CD4-positive, alpha-beta T cell (primary cell): ENCODE measurements at regions of chr3 and their contacts with region 1.

Region 1: DNA sequence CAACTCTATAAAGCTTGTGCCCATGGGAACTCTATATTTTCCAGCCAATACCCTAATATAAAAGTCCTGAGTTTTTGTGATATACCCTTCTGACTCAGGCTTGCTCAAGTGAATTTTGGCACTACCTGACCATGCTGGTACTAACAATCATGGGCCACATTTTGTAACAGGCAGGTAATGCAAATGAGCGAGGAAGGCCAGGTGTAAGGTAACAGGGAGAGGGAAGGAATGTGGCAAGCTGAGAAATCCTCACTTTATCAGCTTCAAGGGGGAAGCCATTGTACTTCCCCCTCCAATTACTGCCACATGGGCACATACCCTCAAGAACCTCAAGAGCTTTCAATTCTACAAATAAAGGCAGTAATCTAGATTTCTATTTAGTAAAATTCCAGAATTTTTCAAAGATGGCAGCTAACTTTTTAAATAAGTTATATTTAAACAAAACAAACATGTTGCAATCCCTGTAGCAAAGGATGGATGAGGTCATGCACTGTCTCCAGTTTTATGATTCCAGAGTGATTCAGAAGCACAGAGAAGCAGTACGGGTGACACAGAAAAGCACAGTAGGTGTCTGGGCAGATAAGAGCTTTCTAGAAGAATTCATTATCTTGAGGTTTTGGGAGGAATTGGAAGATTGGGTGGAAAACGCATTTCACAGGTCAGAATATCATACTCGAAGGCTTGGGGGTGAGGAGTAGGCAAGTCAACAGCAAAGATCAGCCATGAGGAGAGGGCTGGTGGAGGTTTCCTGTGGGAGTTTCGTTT is 87.6 kb downstream of the FOXP1 start:
- DNase-seq: peak in 4 of 14 experiments; percentile 41 to 70 (median 57)
- ATAC-seq: no peak
- H3K4me3 ChIP-seq: peak overlapping the region; percentile 33
- H3K4me3 Mint-ChIP-seq: peak overlapping the region; percentile 71
- H3K27ac ChIP-seq: peak overlapping the region; percentile 51 to 64
- H3K27ac Mint-ChIP-seq: peak overlapping the region; percentile 95
- H3K4me1 ChIP-seq: peaks cover 61% of the 10 kb centered on the region
- H3K4me1 Mint-ChIP-seq: peaks cover 90% of the 10 kb centered on the region
- H3K27me3 ChIP-seq: no peaks in the 10 kb centered on the region
- H3K27me3 Mint-ChIP-seq: no peaks in the 10 kb centered on the region
- CTCF ChIP-seq: no peak

Region 2: GRCh38 chr3:70774641-70775040 is 721.2 kb before region 1 on chr3:
- CTCF ChIA-PET with region 1: no interaction called
- POLR2A ChIA-PET with region 1: no interaction called
- intact Hi-C with region 1: no loop called
- DNase-seq: no peak
- ATAC-seq: no peak
- H3K4me3 ChIP-seq: no peak overlapping the region
- H3K4me3 Mint-ChIP-seq: no peak overlapping the region
- H3K27ac ChIP-seq: no peak overlapping the region
- H3K27ac Mint-ChIP-seq: no peak overlapping the region
- H3K4me1 ChIP-seq: no peaks in the 10 kb centered on the region
- H3K4me1 Mint-ChIP-seq: no peaks in the 10 kb centered on the region
- H3K27me3 ChIP-seq: peaks cover 0 to 13% of the 10 kb centered on the region in 2 experiments
- H3K27me3 Mint-ChIP-seq: peaks cover 23% of the 10 kb centered on the region
- CTCF ChIP-seq: no peak

Region 3: DNA sequence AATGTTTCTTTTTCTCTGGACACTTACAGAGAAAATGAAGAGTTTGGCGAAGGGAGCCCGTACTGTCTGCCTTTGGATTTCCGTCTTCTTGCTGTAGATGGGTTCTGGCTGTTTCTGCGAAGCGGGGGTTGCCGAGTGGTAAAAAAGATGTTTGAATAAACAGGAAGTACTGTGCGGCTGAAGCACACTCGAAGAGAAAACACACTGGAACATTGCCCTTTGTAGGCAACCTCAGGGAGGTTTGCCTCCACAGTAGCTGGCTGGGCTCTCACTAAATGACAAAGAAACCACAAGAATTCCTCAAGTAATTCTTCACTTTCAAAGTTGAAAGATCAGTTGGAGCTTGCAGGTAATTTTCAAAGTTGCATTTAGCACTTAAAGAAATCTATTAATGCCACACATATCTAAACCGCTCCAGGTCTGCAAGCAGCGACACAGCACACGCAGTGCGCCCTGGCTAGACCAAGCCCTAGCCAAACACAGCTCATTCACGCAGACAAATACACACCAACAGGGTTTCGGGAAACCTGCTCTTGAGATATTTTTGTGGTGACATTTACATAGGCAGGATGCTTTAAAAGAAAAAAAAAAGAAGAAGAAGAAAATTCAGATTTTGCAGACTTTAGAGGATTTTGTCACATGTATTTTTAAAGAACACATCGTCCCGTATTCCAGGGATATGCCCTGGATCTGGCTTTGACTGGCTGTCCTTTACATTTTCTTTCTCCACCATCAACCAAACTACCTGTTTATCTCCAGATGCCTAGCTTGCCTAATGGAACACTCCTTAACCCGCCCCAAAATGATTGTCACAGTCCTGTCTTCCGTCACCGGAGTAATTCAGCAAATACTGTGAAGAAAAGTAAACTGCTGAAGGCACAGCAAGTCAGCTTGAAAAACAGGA is 365.2 kb before region 1 on chr3:
- CTCF ChIA-PET with region 1: no interaction called
- POLR2A ChIA-PET with region 1: interaction called, 6 read pairs
- intact Hi-C with region 1: loop called in 1 of 2 experiments (anchors 5 kb)
- DNase-seq: peak; percentile 56 to 89 (median 73)
- ATAC-seq: peak; percentile 76
- H3K4me3 ChIP-seq: peak overlapping the region; percentile 70
- H3K4me3 Mint-ChIP-seq: peak overlapping the region; percentile 91
- H3K27ac ChIP-seq: peak overlapping the region; percentile 79 to 93
- H3K27ac Mint-ChIP-seq: peak overlapping the region; percentile 98
- H3K4me1 ChIP-seq: peaks cover 53% of the 10 kb centered on the region
- H3K4me1 Mint-ChIP-seq: peaks cover 88% of the 10 kb centered on the region
- H3K27me3 ChIP-seq: no peaks in the 10 kb centered on the region
- H3K27me3 Mint-ChIP-seq: no peaks in the 10 kb centered on the region
- CTCF ChIP-seq: no peak

Region 4: GRCh38 chr3:71369701-71370391 is 126.0 kb before region 1 on chr3:
- CTCF ChIA-PET with region 1: no interaction called
- POLR2A ChIA-PET with region 1: interaction called, 4 read pairs
- intact Hi-C with region 1: loop called (anchors 2 to 5 kb)
- DNase-seq: no peak
- ATAC-seq: no peak
- H3K4me3 ChIP-seq: no peak overlapping the region
- H3K4me3 Mint-ChIP-seq: no peak overlapping the region
- H3K27ac ChIP-seq: no peak overlapping the region
- H3K27ac Mint-ChIP-seq: peak overlapping the region; percentile 87
- H3K4me1 ChIP-seq: peaks cover 41% of the 10 kb centered on the region
- H3K4me1 Mint-ChIP-seq: peaks cover 82% of the 10 kb centered on the region
- H3K27me3 ChIP-seq: no peaks in the 10 kb centered on the region
- H3K27me3 Mint-ChIP-seq: no peaks in the 10 kb centered on the region
- CTCF ChIP-seq: no peak

Region 5: DNA sequence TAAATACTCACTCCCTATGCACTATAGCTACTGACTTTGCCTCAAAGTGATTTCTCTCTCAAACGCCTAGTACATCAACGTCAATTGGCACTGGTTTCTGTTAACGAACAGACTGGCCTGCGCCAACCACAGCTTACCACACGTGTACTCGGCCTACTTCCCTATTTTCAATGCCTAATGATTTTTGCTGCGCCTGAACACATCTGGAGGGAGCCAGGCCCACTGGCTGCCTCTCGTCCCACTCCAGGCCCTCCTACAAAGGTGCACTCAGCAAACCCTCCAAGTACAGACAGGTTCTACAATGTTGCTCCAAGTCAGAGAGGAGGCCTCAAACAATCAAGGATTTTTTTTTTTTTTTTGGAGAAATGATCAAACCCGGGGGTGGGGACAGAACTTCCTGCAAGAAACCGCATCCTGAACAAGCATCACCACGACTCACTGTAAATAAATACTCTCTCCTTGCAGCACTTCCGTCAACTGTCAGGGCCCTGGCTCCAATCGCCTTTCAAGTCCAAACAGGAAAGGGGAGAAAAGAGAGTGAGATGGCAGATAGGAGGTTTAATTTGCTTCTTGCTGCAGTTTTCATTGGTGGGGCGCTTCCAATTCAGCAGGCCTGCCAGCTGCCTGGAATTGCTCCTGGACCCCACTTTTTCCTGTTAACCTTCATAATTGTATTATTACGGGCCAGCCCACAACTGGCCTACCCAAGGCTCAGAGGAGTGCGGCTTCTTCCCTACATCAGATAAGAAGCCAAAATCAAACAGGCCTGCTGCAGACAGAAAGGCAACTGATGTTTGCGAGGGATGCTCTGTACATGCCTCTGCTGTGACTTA is 51.6 kb before region 1 on chr3:
- CTCF ChIA-PET with region 1: no interaction called
- POLR2A ChIA-PET with region 1: interaction called, 11 read pairs
- intact Hi-C with region 1: loop called in 1 of 2 experiments (anchors 2 kb)
- DNase-seq: peak; percentile 53 to 95 (median 68)
- ATAC-seq: peak; percentile 78
- H3K4me3 ChIP-seq: no peak overlapping the region
- H3K4me3 Mint-ChIP-seq: peak overlapping the region; percentile 79
- H3K27ac ChIP-seq: peak overlapping the region; percentile 67 to 82
- H3K27ac Mint-ChIP-seq: peak overlapping the region; percentile 94
- H3K4me1 ChIP-seq: peaks cover 97% of the 10 kb centered on the region
- H3K4me1 Mint-ChIP-seq: peaks cover 97% of the 10 kb centered on the region
- H3K27me3 ChIP-seq: no peaks in the 10 kb centered on the region
- H3K27me3 Mint-ChIP-seq: no peaks in the 10 kb centered on the region
- CTCF ChIP-seq: no peak

Region 6: DNA sequence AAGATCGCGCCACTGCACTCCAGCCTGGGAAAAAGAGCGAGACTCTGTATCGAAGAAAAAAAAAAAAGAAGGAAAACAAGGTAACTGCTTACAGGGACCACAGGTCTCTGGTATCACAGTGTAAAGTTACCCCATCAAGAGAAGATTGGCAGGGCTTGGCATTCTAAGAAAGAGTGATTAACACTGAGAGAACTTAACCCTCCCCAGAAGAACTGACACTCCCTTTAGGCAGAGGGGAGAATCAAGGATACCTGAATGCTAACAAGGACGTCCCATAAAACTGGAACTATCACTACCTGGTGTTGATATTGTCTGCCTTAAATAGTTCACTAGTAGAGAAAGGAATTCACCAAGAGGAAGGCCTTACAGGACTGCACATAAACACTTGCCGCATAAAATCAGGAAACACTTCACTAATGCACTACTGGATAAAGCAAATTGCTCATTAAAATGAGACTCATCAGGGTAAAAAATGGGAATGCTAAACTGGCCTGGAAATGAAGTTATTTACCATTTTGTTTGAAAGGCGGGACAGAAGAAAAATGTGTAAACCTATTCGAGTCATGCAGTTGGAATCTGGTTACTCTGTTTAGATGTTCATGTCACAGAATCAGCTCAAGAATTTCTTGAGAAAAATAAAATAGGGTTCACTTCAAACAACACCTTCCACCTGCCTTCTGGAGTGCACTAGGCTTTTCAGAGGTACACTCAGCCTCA is 34.0 kb before region 1 on chr3:
- CTCF ChIA-PET with region 1: no interaction called
- POLR2A ChIA-PET with region 1: interaction called, 14 read pairs
- intact Hi-C with region 1: loop called in 1 of 2 experiments (anchors 5 kb)
- DNase-seq: no peak
- ATAC-seq: no peak
- H3K4me3 ChIP-seq: no peak overlapping the region
- H3K4me3 Mint-ChIP-seq: peak overlapping the region; percentile 49
- H3K27ac ChIP-seq: peak overlapping the region in 1 of 2 donors; percentile 2
- H3K27ac Mint-ChIP-seq: peak overlapping the region; percentile 94
- H3K4me1 ChIP-seq: peaks cover 35% of the 10 kb centered on the region
- H3K4me1 Mint-ChIP-seq: peaks cover 87% of the 10 kb centered on the region
- H3K27me3 ChIP-seq: no peaks in the 10 kb centered on the region
- H3K27me3 Mint-ChIP-seq: no peaks in the 10 kb centered on the region
- CTCF ChIP-seq: no peak

Region 7: GRCh38 chr3:71512000-71512399 is 16.1 kb after region 1 on chr3:
- CTCF ChIA-PET with region 1: interaction called, 3 read pairs
- POLR2A ChIA-PET with region 1: interaction called, 9 read pairs
- intact Hi-C with region 1: loop called in 1 of 2 experiments (anchors 2 kb)
- DNase-seq: peak in 9 of 14 experiments; percentile 20 to 85 (median 46)
- ATAC-seq: peak; percentile 99
- H3K4me3 ChIP-seq: no peak overlapping the region
- H3K4me3 Mint-ChIP-seq: no peak overlapping the region
- H3K27ac ChIP-seq: no peak overlapping the region
- H3K27ac Mint-ChIP-seq: no peak overlapping the region
- H3K4me1 ChIP-seq: peaks cover 22% of the 10 kb centered on the region
- H3K4me1 Mint-ChIP-seq: peaks cover 21% of the 10 kb centered on the region
- H3K27me3 ChIP-seq: no peaks in the 10 kb centered on the region
- H3K27me3 Mint-ChIP-seq: no peaks in the 10 kb centered on the region
- CTCF ChIP-seq: peak; percentile 70